ENCODE measurements at regions of chr15 and their contacts with region 1.

Region 1: DNA sequence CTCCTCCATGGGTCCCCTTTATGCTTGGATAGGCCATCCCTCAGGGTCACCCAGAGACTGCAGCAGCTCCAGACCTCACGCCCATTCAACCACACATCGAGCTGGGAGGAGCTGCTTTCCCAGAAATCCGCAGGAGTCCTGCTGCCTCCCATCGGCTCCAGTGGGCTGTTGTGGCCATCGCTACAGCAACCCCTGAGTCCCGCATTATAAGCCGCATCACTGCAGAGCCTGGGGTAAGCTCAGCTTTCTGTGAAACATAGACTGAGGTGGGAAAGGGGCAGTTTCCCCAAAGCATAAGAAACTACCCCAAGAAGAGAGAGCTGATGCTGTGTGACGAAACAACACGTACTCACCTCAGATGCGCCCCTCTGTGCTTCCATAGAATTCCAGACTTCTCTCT is 35.7 kb downstream of the MRPL46 start:
- DNase-seq: no peak
- H3K4me3 ChIP-seq: no peak overlapping the region
- CTCF ChIP-seq: no peak

Region 2: GRCh38 chr15:88331280-88331679 is 100.2 kb before region 1 on chr15:
- in situ Hi-C with region 1: loop called (anchors 5 kb)
- DNase-seq: no peak
- H3K4me3 ChIP-seq: no peak overlapping the region
- CTCF ChIP-seq: peak; percentile 50

Region 3: DNA sequence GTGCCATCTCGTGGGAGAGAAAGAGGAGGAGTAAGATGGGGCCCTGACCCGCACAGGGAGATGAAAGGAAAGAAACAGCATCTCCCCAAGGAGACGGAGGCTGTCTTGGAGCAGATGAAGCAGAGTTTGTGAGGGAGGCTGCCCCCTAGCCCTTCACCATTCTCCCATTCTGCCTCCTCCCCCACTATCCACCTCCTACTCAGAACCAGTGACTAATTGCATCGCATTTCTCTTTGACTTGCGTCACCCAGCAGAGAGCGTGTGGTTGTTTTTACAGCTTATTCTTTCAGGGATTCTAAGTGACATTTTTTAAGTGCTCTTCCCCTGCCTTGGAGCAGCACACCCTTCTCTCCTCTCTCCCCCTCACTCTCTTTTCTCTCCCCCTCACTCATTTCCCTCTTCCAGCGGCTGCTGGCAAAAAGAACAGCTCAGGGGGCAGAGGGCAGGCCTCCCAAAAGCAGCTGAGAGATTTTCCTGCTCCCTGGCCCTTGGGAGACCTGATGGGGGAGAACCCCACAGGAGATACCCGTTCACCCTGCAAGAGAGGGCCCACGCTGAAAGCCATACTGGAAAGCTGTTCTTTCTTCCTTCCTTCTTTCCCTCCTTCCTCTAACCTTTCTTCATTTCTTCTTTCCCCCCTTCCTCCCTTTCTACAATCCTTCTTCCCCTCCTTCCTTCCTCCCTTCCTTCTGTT is 56.1 kb before region 1 on chr15:
- in situ Hi-C with region 1: loop called (anchors 5 kb)
- DNase-seq: peak; percentile 6
- H3K4me3 ChIP-seq: no peak overlapping the region
- CTCF ChIP-seq: no peak

Region 4: GRCh38 chr15:88391700-88392099 is 39.7 kb before region 1 on chr15:
- in situ Hi-C with region 1: no loop called
- DNase-seq: no peak
- H3K4me3 ChIP-seq: no peak overlapping the region
- CTCF ChIP-seq: no peak